ENCODE measurements at regions of chr1 and their contacts with region 1.

Region 1: GRCh38 chr1:11735854-11736745 is at the start of gene AGTRAP:
- DNase-seq: no peak

Region 2: DNA sequence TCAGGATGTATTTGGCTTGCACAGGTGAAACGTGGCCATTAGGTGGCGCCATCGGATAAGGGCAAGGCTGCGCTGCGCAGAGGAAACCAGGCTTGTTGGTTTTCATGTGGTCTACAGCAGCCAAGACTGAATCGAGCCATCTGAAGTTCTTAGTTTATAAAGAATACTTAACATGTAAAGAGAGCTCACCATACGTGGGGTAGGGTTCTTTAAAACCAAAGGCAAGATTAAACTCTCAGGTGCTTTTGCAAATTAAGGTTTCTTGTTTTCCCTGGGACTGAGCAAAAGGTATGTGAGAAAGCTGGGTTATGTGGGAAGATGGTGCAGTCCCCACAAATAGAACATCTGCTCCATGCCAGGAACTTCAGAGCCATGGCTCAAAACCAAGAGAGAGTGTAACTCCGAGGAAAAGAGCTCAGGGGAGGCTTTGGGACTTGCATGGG is 698.3 kb before region 1 on chr1:
- in situ Hi-C with region 1: loop called (anchors 25 kb)
- DNase-seq: peak; percentile 86

Measured in KBM-7 (cell line).